AG04449 (cell line): ENCODE measurements at regions of chr1 and their contacts with region 1.

Region 1: DNA sequence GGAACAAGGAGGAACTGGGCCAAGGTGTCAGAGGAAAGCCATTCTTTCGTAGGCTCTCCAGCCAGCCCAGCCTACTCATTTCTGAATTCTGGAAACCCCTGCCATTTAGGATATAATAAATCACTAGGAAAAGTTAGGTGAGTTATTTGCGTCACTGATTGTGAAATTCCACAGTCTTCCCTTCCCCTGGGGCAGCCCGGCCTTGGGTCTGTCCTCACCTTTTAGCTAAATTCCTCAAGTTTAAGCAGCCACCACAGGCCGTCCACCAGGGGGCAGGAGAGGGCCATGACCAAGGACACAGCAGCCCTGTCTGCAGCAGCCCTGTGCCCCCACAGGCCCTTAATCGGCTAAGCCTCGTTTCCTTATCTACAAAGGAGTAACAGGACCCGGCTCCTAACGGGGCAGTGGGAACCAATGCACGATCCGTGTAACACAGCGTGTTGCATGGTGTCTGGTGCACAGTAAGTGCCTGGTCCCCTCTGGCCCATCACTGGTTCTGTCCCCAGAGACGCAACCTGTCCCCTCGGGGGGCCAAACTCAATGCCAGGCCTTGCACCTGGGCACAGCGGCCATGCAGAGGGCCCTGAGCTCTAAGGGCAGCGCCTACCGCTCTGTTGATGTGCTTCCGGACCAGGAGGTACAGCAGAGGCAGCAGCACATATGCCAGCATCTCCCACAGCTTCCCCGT is 18.1 kb downstream of the GPR157 start:
- DNase-seq: peak; percentile 34
- H3K4me3 ChIP-seq: no peak overlapping the region
- CTCF ChIP-seq: peak; percentile 92

Region 2: DNA sequence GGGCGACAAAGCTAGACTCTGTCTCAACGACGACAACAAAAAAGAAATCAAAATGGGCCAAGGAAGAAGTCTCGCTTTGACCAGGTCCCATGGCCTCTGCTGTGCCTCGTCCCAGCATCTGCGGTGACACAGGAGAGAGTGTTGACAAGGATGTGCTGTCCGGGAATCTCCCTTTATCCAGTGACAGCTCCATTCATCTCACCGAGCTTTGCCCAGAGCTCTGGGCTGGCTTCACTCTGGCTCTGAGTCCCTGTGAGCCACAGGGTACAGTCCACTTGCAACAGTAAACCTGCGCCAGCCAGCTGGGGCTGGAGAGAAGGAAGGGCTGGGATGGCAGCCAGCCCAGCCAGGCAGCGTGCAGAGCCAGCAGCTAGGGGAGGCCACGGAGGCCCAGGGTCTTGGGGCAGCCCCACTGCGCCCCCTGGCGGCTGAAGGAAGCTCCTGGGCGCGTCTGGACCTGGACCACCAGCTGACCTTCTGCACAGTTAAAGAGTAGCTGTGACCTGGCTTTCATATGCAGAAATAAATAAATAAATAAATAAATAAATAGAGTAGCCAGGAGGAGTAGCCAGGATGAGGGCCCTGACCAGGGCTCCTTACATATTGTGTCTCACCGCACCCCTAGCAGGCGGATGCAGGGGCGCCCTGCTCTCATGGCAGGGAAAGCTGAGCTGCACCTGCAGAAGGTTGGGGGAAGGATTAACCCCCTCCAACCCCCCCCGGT is 262.0 kb before region 1 on chr1:
- CTCF ChIA-PET with region 1: no interaction called
- POLR2A ChIA-PET with region 1: no interaction called
- DNase-seq: peak; percentile 69
- H3K4me3 ChIP-seq: no peak overlapping the region
- CTCF ChIP-seq: peak; percentile 98

Region 3: DNA sequence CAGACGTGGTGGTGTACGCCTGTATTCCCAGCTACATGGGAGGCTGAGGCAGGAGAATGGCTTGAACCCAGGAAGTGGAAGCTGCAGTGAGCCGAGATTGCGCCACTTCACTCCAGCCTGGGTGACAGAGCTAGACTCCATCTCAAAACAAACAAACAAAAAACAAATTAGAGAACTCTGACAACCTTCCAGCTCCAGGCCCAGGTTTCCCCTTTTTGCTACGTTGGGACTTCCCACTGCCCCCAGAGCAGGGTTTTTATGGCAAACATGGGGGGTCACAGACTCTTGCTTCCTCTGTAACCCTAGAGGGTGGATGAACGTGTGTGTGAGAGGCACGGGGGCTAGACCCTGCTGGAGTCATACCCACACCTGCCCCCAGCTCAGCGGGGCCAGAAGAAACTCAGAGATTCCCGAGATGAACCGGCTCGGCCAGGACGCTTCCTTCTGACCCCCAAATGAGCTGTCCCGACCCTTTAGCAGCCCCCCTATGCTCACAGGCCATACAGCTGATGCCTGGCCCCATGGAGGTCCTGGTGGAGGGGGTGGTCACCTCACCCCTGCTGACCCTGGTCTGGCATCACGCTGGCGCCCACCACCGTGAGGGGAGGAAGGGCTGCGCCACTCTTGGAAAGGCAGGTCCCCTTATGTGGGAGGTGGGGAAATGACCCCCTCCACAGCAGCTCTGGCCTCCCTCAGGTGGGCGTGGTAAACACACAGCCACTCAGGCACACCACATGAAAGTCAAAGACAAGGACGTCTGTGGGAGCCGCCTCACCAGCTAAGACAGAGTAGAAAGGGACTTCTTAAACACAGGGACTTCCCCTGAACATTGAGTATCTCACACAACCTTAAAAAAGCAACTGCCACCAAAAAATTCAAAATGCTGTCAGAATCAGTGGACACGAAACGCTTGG is 10.9 kb after region 1 on chr1:
- CTCF ChIA-PET with region 1: interaction called, 45 read pairs
- POLR2A ChIA-PET with region 1: no interaction called
- DNase-seq: no peak
- H3K4me3 ChIP-seq: no peak overlapping the region
- CTCF ChIP-seq: no peak

Region 4: DNA sequence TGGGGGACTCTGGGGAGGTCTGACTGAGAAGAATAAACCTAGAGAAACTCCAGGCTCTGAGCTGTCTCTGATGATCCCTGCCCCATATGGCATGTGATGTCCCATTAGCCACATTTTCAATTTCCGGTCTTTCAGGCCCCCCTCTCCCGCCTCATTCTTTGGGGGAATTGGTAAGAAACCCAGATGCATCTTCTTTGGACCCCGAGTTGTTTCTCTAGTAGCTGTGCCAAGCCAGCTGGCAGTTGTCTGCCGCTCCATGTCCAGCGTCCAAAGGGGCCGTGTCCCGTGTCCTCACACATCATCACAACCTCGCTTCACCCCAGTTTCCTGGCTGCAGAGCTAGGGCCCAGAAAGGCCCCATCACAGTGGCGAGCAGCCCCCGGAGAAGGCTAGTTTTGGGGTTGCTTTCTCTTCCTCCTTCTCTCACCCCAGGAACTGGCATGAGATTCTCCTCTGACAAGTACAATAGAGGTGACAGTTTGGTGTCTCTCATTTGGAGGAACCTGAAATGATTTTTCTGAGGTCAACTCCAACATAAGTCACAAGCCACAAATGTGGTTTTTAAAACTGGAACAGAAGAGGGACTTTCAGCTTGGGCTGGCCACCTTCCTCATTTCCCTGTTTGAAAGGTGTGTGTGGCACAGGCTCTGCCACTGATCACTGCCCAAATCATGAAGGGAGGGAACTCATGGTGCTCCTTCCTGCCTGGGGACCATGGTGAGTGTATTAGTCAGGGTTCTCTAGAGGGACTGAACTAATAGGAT is 24.4 kb after region 1 on chr1:
- CTCF ChIA-PET with region 1: interaction called, 45 read pairs
- POLR2A ChIA-PET with region 1: no interaction called
- DNase-seq: no peak
- H3K4me3 ChIP-seq: no peak overlapping the region
- CTCF ChIP-seq: no peak

Region 5: DNA sequence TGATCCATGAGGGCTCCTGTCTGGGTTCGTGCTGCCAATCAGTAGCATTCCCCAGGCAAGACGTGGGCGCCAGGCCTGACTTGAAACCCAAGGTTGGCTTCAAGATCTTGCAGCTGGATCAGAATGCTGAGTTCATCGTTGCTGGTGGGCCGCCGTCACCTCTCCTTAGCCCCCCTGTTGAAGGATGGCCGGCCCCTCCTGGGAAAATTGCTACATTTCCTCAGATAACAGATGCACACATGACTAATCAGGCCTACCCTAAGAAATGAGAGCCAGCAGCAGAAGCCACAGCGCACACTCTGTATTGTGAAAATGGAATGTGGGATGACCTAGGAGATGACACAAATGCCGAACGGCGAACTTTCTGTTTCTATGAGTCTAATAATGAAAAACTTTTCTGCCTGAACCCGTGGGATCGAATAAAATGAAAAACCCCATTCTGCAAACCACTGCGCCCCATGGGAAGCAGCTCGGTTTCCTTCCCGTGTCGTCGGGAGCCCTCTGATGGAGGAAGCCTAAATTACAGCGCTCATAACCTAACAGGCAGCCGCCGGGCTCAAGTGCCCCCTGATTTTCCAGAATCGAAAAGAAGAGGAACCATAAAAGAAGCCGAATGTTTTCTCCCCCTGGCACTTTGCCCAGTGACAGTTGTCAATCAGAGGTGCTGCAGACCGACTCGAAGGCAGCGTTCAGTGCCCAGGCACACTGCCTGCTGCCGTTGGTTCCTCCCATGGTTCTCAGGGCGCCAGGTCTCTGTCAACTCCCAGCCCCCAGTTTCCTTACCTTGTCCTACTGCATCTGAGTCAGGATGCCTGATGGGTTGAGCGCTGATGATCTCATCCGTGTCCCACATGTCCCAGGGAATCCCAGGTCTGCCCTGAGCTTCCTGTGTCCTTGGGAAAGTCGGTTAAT is 85.6 kb after region 1 on chr1:
- CTCF ChIA-PET with region 1: interaction called, 48 read pairs
- POLR2A ChIA-PET with region 1: no interaction called
- DNase-seq: no peak
- H3K4me3 ChIP-seq: peak overlapping the region; percentile 12
- CTCF ChIP-seq: peak; percentile 69

Region 6: GRCh38 chr1:9234223-9235095 is 123.6 kb after region 1 on chr1 and contains the start of gene H6PD:
- CTCF ChIA-PET with region 1: interaction called, 14 read pairs
- POLR2A ChIA-PET with region 1: no interaction called
- DNase-seq: no peak
- H3K4me3 ChIP-seq: peak within 1 kb of the TSS; percentile 66
- CTCF ChIP-seq: peak; percentile 86

Region 7: GRCh38 chr1:9326596-9326995 is 215.8 kb after region 1 on chr1:
- CTCF ChIA-PET with region 1: no interaction called
- POLR2A ChIA-PET with region 1: no interaction called
- DNase-seq: peak; percentile 65
- H3K4me3 ChIP-seq: no peak overlapping the region
- CTCF ChIP-seq: no peak